Mammary epithelial cell (primary cell): ENCODE measurements at regions of chr3 and their contacts with region 1.

Region 1: GRCh38 chr3:73624821-73625665 is at the start of gene PDZRN3:
- DNase-seq: peak; percentile 51
- H3K4me3 ChIP-seq: peak within 1 kb of the TSS; percentile 56 to 79 (median 78)
- H3K27ac ChIP-seq: no peak within 1 kb of the TSS
- H3K4me1 ChIP-seq: peaks cover 23% of the 10 kb centered on the region
- H3K27me3 ChIP-seq: no peaks in the 10 kb centered on the region
- CTCF ChIP-seq: no peak
- total RNA-seq, gene PDZRN3: 3.9 to 14.3 TPM

Region 2: DNA sequence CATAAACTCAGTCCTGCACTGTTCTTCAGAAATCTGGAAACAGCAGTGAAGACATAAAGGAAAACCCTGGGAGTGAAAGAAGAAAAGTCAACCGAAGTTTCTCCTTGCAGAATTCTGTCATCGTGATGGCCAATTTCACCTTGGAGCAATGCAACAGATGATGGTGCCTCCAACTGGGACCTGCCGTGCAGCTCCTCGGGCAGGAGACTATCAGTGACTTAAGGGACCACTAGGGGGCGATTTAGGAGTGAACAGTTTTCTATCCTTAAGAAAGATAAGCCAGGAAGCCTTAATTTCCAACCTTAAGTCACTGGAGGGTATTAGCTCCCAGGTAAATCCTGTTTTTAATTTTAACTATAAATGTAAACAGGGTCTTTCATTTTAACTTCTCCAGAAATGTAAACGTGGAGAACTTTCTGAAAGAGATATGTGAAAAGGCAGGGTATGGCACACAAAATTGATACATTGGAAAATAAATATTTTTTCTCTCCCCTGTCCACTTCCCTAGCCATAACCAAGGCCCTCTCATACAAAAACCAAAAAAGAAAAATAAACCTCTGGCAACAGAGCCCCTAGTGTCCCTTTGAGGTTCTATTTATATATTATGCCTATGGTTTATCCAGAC is 116.6 kb before region 1 on chr3:
- CTCF ChIA-PET with region 1: interaction called, 9 read pairs
- dilution Hi-C with region 1: no loop called
- in situ Hi-C with region 1: no loop called
- intact Hi-C with region 1: loop called (anchors 1 kb)
- DNase-seq: peak; percentile 45
- H3K4me3 ChIP-seq: no peak overlapping the region
- H3K27ac ChIP-seq: no peak overlapping the region
- H3K4me1 ChIP-seq: no peaks in the 10 kb centered on the region
- H3K27me3 ChIP-seq: no peaks in the 10 kb centered on the region
- CTCF ChIP-seq: peak; percentile 73 to 77

Region 3: DNA sequence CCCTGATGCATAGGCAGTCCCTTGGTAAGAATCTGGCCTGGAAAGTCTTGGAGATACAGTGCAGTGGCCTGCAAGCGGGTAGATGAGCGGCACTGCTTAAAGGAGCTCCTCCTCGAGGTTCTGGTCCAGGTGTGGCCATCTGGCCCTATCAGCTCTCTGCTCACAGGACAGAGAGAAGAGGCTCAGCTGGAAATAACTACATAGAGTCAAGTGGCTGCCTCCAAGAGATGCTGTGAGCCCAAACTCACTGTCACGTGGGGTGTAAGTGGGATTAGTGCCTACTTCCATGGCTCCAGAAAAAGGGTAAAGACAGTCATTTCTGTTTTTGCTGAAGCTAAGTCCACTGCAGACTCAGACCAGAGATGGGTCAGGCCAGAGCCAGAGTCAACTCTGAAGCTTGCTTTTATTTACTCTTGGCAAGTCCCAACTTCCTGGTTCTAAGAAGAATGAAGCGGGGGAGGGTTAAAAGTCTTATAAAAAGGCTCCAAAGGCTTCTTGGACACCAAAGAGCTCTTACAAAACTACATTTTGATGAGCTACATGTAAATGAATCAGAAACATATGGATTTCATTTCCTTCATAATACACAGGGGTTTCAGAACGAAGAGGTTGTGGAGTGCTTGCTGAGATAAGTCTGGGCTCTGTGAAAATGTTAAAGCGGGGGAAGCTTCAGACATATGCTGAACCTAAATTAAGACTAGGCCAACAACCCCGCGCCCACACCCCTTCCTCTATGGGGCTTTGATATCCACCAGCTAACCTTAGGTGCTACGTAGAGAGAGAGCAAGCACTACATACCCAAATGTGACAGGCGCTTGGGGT is 77.4 kb before region 1 on chr3:
- CTCF ChIA-PET with region 1: no interaction called
- dilution Hi-C with region 1: loop called (anchors 5 kb)
- in situ Hi-C with region 1: no loop called
- intact Hi-C with region 1: no loop called
- DNase-seq: no peak
- H3K4me3 ChIP-seq: no peak overlapping the region
- H3K27ac ChIP-seq: peak overlapping the region; percentile 63
- H3K4me1 ChIP-seq: peaks cover 21% of the 10 kb centered on the region
- H3K27me3 ChIP-seq: no peaks in the 10 kb centered on the region
- CTCF ChIP-seq: no peak

Region 4: GRCh38 chr3:73681218-73682009 is 56.4 kb after region 1 on chr3:
- CTCF ChIA-PET with region 1: no interaction called
- dilution Hi-C with region 1: no loop called
- in situ Hi-C with region 1: no loop called
- intact Hi-C with region 1: no loop called
- DNase-seq: peak; percentile 61
- H3K4me3 ChIP-seq: no peak overlapping the region
- H3K27ac ChIP-seq: no peak overlapping the region
- H3K4me1 ChIP-seq: peaks cover 9% of the 10 kb centered on the region
- H3K27me3 ChIP-seq: no peaks in the 10 kb centered on the region
- CTCF ChIP-seq: no peak